Natural killer cell (primary cell): ENCODE measurements at regions of chr19 and their contacts with region 1.

Region 1: DNA sequence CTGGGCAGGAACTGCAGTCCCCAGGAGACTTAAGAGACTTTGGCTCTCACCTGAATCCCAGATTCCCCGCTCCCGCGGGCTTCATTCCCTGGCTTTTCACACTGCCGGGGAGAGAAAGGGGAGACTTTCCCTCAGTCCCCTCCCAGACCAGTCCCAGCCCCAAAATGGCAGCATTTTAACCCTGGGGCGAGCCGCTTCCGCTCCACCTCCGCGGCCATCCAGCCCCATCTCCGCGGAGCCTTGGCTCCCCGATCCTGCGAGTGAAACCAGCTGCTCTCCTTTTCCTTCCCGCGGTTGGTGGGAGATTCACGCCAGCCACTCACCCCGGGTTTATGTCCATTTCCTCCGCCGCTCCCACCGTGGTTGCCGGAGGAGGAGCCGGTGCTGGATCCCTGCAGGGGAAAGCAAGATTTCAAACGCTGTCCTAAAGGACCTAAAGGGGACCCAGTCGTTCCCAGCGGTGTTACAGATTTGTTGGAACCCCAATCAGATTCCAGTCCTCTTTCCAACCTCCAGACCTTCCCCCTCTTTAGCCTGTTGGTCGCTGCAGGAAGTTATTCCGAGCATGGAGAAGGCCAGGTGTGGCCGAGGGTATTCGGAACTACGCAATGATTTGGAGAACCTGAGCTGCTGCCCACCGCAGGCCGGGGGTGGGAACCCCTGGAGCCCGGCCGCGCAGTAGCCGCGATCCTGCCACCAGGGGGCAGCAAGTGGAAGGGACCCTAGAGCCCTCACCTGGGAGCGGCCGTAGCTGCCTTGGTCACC is 3.4 kb downstream of the DMKN start:
- DNase-seq: peak; percentile 74 to 85
- ATAC-seq: peak; percentile 71 to 76 (median 75)
- H3K4me3 ChIP-seq: peak overlapping the region; percentile 55
- H3K4me3 Mint-ChIP-seq: peak overlapping the region; percentile 89
- H3K27ac ChIP-seq: peak overlapping the region; percentile 46
- H3K27ac Mint-ChIP-seq: peak overlapping the region; percentile 64 to 82
- H3K4me1 ChIP-seq: peaks cover 23% of the 10 kb centered on the region
- H3K4me1 Mint-ChIP-seq: peaks cover 8 to 24% of the 10 kb centered on the region in 2 donors
- H3K27me3 ChIP-seq: peaks cover 11% of the 10 kb centered on the region
- H3K27me3 Mint-ChIP-seq: peaks cover 7 to 19% of the 10 kb centered on the region in 2 donors
- CTCF ChIP-seq: peak; percentile 98

Region 2: GRCh38 chr19:35592226-35592625 is 82.2 kb after region 1 on chr19:
- intact Hi-C with region 1: loop called (anchors 1 kb)
- DNase-seq: peak in 1 of 2 donors; percentile 76
- ATAC-seq: peak in 2 of 3 donors; percentile 43 to 52
- H3K4me3 ChIP-seq: no peak overlapping the region
- H3K4me3 Mint-ChIP-seq: no peak overlapping the region
- H3K27ac ChIP-seq: no peak overlapping the region
- H3K27ac Mint-ChIP-seq: no peak overlapping the region
- H3K4me1 ChIP-seq: no peaks in the 10 kb centered on the region
- H3K4me1 Mint-ChIP-seq: peaks cover 0 to 6% of the 10 kb centered on the region in 2 donors
- H3K27me3 ChIP-seq: no peaks in the 10 kb centered on the region
- H3K27me3 Mint-ChIP-seq: peaks cover 5 to 10% of the 10 kb centered on the region in 2 donors
- CTCF ChIP-seq: peak; percentile 53

Region 3: GRCh38 chr19:35812220-35813042 is 302.4 kb after region 1 on chr19 and contains the start of gene PRODH2:
- intact Hi-C with region 1: no loop called
- DNase-seq: no peak
- ATAC-seq: no peak
- H3K4me3 ChIP-seq: no peak within 1 kb of the TSS
- H3K4me3 Mint-ChIP-seq: no peak within 1 kb of the TSS
- H3K27ac ChIP-seq: no peak within 1 kb of the TSS
- H3K27ac Mint-ChIP-seq: no peak within 1 kb of the TSS
- H3K4me1 ChIP-seq: no peaks in the 10 kb centered on the region
- H3K4me1 Mint-ChIP-seq: peaks cover 0 to 7% of the 10 kb centered on the region in 2 donors
- H3K27me3 ChIP-seq: no peaks in the 10 kb centered on the region
- H3K27me3 Mint-ChIP-seq: peaks cover 0 to 14% of the 10 kb centered on the region in 2 donors
- CTCF ChIP-seq: no peak
- total RNA-seq, gene PRODH2: not detected